PC-3 (cell line): ENCODE measurements at regions of chr10 and their contacts with region 1.

Region 1: DNA sequence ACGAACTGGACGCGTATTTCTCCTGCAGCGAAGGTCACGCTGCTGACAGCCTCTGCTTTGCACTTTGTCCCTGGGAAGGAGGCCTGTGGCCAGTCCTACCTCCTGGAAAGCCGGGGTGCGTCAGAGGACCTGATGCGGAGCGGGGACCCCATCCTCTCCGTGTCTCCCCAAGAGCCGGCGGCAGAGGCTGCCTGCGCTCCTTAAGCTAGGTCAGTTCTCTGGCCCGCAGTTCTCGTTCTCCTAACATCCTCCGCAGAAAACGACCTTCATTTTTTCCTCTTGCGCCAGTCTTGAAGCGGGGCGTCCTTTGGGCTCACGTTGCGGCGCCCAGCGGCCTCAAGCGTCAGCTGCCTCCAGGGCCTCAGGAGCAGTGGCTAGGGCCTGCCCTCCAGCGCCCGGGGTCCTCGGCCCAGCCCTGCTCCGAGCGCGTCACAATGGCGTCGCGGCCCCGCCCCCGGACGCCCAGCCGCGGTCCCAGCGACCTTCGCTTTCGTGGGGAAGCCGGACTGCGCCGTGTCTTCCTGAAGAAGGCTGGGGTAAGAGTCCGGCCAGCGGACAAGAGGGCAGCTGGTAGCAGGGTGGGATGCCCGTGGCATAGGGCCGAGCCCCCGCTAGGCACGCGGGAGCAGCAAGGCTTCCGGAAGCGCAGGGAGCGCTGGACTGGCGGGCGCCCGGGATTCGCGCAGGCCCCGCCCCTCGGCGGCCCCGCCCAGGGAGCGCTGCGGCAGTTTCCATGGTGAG is at the start of gene ZNF487:
- DNase-seq: peak; percentile 93
- ATAC-seq: peak; percentile 95
- H3K4me3 ChIP-seq: peak within 1 kb of the TSS; percentile 78
- H3K27ac ChIP-seq: peak within 1 kb of the TSS; percentile 83
- H3K4me1 ChIP-seq: peaks cover 5% of the 10 kb centered on the region; the same call in 1 of the 2 replicates
- H3K27me3 ChIP-seq: no peaks in the 10 kb centered on the region
- CTCF ChIP-seq: no peak
- total RNA-seq, gene ZNF487: 7.0 and 9.4 TPM in 2 replicates

Region 2: DNA sequence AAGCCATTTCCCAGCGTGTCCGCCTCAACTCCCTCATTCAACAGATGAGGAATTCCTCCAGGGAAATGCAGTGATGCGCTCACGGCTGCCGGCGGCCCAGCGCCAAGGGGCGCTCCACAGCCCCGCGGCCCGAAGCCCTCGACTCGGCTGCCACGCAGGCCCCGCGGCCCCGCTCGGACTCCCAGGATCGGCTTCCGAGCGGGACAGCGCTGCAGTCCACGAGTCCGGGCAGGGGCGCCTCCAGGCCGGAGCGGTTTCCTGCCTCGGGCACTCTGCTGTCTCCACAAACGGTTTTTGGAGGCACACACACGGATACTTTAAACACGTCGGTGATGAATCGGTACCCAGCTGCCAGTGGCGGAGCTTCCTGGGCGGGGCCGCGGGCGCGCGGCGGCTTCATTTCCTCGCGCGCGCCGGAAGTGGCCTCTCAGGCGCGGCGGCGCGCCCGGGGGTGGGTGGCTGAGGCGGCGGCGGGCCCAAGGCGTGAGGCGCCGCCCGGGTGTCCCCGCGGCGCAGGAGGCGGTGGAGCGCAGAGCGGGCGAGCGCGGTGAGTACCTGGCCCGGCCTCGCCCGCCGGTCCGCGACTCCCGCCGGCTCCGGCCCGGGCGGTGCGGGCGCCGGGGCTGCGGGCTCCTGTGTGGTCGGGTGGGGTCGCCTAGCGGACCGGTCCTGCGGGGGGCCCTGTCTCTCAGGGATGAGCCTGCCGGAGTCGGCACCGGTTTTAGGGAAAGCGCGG is 298.4 kb before region 1 on chr10 and contains the start of gene CSGALNACT2:
- CTCF ChIA-PET with region 1: no interaction called
- POLR2A ChIA-PET with region 1: no interaction called
- intact Hi-C with region 1: loop called (anchors 1 kb)
- DNase-seq: peak; percentile 91
- ATAC-seq: peak; percentile 58
- H3K4me3 ChIP-seq: peak within 1 kb of the TSS; percentile 87
- H3K27ac ChIP-seq: peak within 1 kb of the TSS; percentile 55
- H3K4me1 ChIP-seq: peaks cover 35% of the 10 kb centered on the region
- H3K27me3 ChIP-seq: no peaks in the 10 kb centered on the region
- CTCF ChIP-seq: peak; percentile 7; the same call in 1 of the 2 replicates
- total RNA-seq, gene CSGALNACT2: 3.6 and 3.9 TPM in 2 replicates

Region 3: DNA sequence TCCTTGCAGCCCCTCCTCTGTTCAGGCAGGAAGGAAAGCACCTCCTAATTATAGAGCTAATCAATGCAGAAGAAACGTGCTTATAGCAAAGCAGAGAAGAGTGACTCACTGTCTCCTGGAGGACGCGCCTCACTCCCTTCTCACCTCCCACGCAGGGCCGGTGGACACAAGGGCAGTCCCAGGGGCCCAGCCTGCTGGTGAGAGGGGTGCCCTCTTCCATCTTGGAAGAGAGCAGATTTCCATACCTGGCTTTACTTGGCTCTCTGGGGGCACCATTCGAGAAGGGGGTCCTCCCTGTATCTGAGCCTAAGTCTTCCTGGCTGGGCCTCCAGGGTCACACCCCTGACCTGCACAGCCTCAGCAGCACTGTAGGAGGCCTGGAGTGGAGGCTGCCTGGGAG is 225.5 kb before region 1 on chr10:
- CTCF ChIA-PET with region 1: interaction called, 13 read pairs
- POLR2A ChIA-PET with region 1: no interaction called
- intact Hi-C with region 1: no loop called
- DNase-seq: peak; percentile 19
- ATAC-seq: peak; percentile 51
- H3K4me3 ChIP-seq: no peak overlapping the region
- H3K27ac ChIP-seq: no peak overlapping the region
- H3K4me1 ChIP-seq: no peaks in the 10 kb centered on the region
- H3K27me3 ChIP-seq: no peaks in the 10 kb centered on the region
- CTCF ChIP-seq: no peak

Region 4: DNA sequence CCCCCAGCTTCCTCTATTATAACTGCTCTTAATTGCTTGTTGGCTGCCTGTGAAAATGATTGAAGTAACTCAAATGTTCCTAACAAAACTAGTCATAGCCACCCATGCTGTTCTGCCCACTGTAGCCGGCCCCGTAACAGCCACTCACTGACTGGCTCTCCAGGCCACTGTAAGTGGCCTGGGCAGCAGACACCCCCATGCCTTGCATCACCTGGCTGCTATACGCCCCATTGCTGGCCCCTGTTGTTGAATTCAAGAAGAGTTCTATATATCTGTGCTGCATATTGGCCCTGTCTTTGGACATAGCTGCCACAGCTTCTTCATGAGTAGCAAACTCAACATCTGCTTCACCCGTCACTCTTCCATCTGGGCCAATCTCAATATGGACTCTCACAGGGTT is 50.0 kb before region 1 on chr10:
- CTCF ChIA-PET with region 1: no interaction called
- POLR2A ChIA-PET with region 1: no interaction called
- intact Hi-C with region 1: no loop called
- DNase-seq: no peak
- ATAC-seq: no peak
- H3K4me3 ChIP-seq: no peak overlapping the region
- H3K27ac ChIP-seq: no peak overlapping the region
- H3K4me1 ChIP-seq: no peaks in the 10 kb centered on the region
- H3K27me3 ChIP-seq: no peaks in the 10 kb centered on the region
- CTCF ChIP-seq: no peak

Region 5: DNA sequence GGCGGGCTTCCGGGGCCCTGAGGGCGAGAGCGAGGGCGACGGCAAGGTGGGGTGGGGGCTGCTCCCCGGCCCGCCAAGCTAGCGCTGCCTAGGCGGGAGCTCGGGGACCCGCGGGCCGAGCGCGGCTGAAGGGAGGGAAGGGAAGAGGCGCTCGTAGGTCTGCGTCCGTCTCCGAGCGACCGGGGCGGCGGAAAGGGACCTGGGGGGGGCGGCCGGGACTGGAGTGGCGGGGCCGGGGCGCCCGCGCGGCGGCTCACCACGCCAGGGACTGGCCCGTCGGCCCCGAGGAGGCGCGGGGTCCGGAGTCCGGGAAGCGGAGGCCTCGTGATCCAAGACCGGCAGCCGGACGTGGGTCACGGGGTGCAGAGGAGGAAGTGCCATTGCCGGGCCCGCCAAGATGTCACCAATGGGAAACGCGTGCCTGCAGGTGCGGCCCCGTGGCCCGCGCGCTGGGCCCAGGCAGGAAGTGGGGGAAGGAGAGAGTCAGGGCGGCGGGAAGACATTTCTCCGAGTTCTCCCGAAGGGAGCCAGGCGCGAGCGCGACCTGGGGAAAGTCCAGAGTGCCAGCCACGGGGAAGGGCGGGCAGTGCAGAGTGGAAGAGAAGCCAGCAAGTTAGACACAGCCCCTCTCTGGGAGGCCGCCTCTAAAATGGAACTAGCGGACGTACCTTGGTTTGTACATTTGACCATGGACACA is 39.5 kb before region 1 on chr10:
- CTCF ChIA-PET with region 1: no interaction called
- POLR2A ChIA-PET with region 1: no interaction called
- intact Hi-C with region 1: loop called (anchors 5 kb)
- DNase-seq: peak; percentile 96
- ATAC-seq: peak; percentile 80
- H3K4me3 ChIP-seq: peak overlapping the region; percentile 78
- H3K27ac ChIP-seq: peak overlapping the region; percentile 93
- H3K4me1 ChIP-seq: peaks cover 54% of the 10 kb centered on the region
- H3K27me3 ChIP-seq: no peaks in the 10 kb centered on the region
- CTCF ChIP-seq: no peak